Activated CD8-positive, alpha-beta T cell treated with anti-CD3 and anti-CD28 coated beads for 36 hours (primary cell): ENCODE measurements at regions of chr4 and their contacts with region 1.

Region 1: DNA sequence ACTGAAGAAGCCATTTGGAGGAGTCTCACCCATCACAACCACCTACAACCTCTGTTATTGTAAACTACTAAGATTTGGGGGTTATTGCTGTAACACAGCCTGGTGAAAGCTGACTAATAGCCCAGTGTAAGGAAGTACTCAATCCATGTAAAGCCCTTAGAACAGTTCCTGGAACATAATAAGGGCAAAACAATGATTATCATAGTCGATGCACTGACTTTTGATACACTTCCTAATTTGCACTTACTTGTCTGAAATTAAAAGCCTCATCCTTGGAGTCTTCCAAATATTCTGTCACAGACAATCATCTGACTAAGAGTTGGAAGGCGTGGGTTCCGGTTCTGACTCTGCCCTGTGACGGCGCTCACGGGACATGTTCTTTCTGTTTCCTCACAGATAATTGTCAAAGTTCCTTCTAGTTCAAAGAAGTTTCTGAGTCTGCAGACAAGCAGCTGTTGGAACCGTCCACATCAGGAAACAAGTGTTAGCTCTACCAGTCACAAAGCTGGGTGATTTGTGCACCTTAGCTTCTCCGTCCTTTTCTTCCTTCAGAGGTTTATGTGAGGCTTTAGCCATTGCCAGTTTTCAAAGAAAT is 33.4 kb upstream of the RASGEF1B start:
- DNase-seq: peak; percentile 83
- ATAC-seq: peak; percentile 72
- H3K4me3 Mint-ChIP-seq: peak overlapping the region; percentile 45
- H3K27ac Mint-ChIP-seq: peak overlapping the region; percentile 65
- H3K4me1 Mint-ChIP-seq: peaks cover 50% of the 10 kb centered on the region
- H3K27me3 Mint-ChIP-seq: no peaks in the 10 kb centered on the region
- CTCF ChIP-seq: no peak

Region 2: GRCh38 chr4:80713409-80713808 is 791.7 kb before region 1 on chr4:
- CTCF ChIA-PET with region 1: no interaction called
- POLR2A ChIA-PET with region 1: no interaction called
- intact Hi-C with region 1: no loop called
- DNase-seq: no peak
- ATAC-seq: no peak
- H3K4me3 Mint-ChIP-seq: no peak overlapping the region
- H3K27ac Mint-ChIP-seq: no peak overlapping the region
- H3K4me1 Mint-ChIP-seq: peaks cover 22% of the 10 kb centered on the region
- H3K27me3 Mint-ChIP-seq: no peaks in the 10 kb centered on the region
- CTCF ChIP-seq: no peak

Region 3: GRCh38 chr4:81071013-81071412 is 434.1 kb before region 1 on chr4:
- CTCF ChIA-PET with region 1: no interaction called
- POLR2A ChIA-PET with region 1: no interaction called
- intact Hi-C with region 1: no loop called
- DNase-seq: no peak
- ATAC-seq: no peak
- H3K4me3 Mint-ChIP-seq: no peak overlapping the region
- H3K27ac Mint-ChIP-seq: no peak overlapping the region
- H3K4me1 Mint-ChIP-seq: no peaks in the 10 kb centered on the region
- H3K27me3 Mint-ChIP-seq: peaks cover 16% of the 10 kb centered on the region
- CTCF ChIP-seq: no peak

Region 4: GRCh38 chr4:81531428-81531827 is 26.3 kb after region 1 on chr4:
- CTCF ChIA-PET with region 1: no interaction called
- POLR2A ChIA-PET with region 1: no interaction called
- intact Hi-C with region 1: no loop called
- DNase-seq: no peak
- ATAC-seq: no peak
- H3K4me3 Mint-ChIP-seq: no peak overlapping the region
- H3K27ac Mint-ChIP-seq: no peak overlapping the region
- H3K4me1 Mint-ChIP-seq: no peaks in the 10 kb centered on the region
- H3K27me3 Mint-ChIP-seq: no peaks in the 10 kb centered on the region
- CTCF ChIP-seq: no peak

Region 5: DNA sequence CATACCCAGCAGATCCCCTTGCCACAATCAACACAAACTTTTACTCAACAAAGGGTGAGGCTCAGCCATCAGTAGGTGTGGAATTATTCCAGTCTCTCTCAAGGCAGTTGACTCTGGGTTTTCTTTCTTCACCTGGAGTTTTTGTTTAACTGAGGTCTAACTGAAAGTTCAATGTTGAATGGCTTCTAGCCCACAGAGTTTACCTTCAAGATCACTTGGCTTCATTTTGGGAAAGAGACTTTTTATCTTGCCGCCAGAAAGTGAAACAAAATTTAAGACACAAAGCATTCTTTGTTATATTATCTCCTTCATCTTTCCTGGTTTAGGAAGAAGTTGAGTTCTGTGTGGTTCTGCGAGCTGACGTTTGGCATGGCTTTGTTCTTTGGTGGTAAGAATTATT is 50.4 kb after region 1 on chr4:
- CTCF ChIA-PET with region 1: no interaction called
- POLR2A ChIA-PET with region 1: no interaction called
- intact Hi-C with region 1: loop called (anchors 5 kb)
- DNase-seq: no peak
- ATAC-seq: no peak
- H3K4me3 Mint-ChIP-seq: no peak overlapping the region
- H3K27ac Mint-ChIP-seq: no peak overlapping the region
- H3K4me1 Mint-ChIP-seq: peaks cover 15% of the 10 kb centered on the region
- H3K27me3 Mint-ChIP-seq: no peaks in the 10 kb centered on the region
- CTCF ChIP-seq: no peak

Region 6: DNA sequence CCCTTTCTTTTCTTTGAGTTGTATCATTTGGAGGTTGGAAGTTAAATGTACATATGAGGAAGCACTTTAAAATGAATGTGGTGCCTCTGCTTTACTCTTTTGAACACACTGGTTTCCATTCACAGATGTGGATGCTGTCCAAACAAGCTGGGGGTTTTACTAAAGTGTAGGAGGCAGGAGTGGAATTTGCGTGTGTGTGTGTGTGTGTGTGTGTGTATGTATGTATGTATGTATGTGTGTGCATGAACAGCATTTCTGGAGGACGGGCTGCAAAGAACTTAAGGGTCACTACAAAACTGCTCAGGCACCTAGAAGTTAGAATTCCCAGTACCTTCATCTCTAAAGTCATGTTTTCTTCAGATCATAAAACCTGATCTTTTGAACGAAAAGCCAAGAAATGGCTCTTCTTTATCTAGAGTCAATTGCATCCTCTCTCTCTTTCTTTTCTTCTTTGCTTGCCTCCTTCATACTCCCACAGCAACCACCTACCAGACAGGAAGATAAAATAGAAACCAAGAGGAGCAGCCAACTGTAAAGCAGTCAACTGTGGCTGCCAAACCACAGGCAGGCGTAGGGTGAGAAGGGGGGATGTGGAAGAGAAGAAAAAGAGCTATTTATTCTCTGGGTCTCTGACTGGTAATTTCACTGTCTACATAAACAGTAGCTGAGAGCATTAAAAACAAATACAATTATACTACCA is 143.6 kb after region 1 on chr4:
- CTCF ChIA-PET with region 1: no interaction called
- POLR2A ChIA-PET with region 1: no interaction called
- intact Hi-C with region 1: loop called (anchors 5 kb)
- DNase-seq: peak; percentile 73
- ATAC-seq: peak; percentile 72
- H3K4me3 Mint-ChIP-seq: peak overlapping the region; percentile 31
- H3K27ac Mint-ChIP-seq: peak overlapping the region; percentile 51
- H3K4me1 Mint-ChIP-seq: peaks cover 63% of the 10 kb centered on the region
- H3K27me3 Mint-ChIP-seq: no peaks in the 10 kb centered on the region
- CTCF ChIP-seq: no peak